Psoas muscle (tissue), 8 donors: ENCODE measurements at regions of chr5 and their contacts with region 1.

Region 1: DNA sequence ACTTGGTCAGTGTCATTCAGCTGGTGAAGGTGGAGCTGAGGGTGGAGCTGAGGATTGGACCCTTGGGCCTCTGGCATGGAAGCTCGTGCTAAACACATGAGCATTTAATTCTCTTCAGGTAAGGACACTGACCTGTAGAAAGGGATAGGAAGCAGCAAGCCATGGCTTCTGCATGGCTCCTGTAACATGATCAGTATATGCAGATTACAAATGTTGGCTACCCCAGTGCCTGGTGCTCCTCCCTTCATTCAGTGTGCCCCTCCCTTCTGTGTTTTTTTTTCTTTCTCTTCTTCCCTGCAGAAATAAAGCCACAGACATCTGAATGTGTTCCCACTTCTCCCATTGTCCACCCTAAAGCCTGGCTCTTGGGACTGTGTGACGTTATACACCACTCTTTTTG is 52.9 kb downstream of the ARHGAP26 start:
- DNase-seq: no peak
- ATAC-seq: no peak
- H3K4me3 ChIP-seq: no peak overlapping the region
- H3K27ac ChIP-seq: no peak overlapping the region
- H3K4me1 ChIP-seq: peaks cover 34% of the 10 kb centered on the region
- H3K27me3 ChIP-seq: no peaks in the 10 kb centered on the region
- CTCF ChIP-seq: no peak

Region 2: DNA sequence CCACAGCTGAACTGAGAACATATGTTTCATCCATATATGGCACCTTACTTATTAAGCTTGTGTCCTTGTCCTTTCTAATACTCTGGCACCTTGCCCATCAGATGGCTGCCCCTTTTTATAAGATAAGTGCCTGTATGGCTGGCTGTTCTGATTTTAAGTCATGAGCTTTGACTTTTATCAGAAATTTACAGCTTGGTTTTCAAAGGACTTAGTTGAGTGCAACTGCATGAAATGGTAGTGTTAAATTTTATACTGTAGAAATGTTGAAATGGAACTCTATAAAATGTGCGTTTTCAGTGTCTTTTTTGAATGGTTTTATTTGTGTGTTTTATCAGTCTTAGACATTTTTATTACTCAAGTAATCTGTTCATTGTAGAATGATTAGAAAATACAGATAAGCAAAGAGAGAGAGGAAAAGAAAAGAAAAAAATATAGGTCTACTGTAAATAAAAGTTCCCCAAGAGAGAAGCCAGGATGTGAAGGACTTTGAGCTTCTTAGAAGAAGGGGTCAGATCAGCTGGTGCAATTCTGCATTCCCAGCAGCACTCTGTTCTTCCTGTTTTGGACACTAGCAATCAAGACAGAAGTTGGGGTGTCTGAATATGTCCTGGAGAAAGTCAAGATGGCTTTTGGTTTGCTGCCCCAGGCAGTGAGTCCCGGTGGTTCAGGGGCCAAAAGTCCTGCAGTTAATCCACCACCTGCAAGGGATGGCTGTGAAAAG is 14.1 kb before region 1 on chr5:
- intact Hi-C with region 1: loop called in 1 of 2 experiments (anchors 1 kb)
- DNase-seq: no peak
- ATAC-seq: no peak
- H3K4me3 ChIP-seq: no peak overlapping the region
- H3K27ac ChIP-seq: no peak overlapping the region
- H3K4me1 ChIP-seq: peaks cover 38% of the 10 kb centered on the region
- H3K27me3 ChIP-seq: no peaks in the 10 kb centered on the region
- CTCF ChIP-seq: no peak